ENCODE measurements at regions of chr1 and their contacts with region 1.

Region 1: GRCh38 chr1:154961497-154962262 is at the start of gene PYGO2:
- DNase-seq: peak; percentile 69 to 77
- H3K4me3 ChIP-seq: peak within 1 kb of the TSS; percentile 62 to 91
- H3K27ac ChIP-seq: peak within 1 kb of the TSS; percentile 98
- H3K4me1 ChIP-seq: peaks cover 0 to 7% of the 10 kb centered on the region in 2 donors
- H3K27me3 ChIP-seq: no peaks in the 10 kb centered on the region
- CTCF ChIP-seq: peak; percentile 61 to 91 (median 90)
- POLR2A ChIP-seq: peak; percentile 64 to 79
- total RNA-seq, gene PYGO2: 10.0 to 36.4 (median 15.9) TPM

Region 2: GRCh38 chr1:155012026-155012546 is 50.4 kb after region 1 on chr1:
- intact Hi-C with region 1: loop called (anchors 5 kb)
- DNase-seq: peak; percentile 72 to 78
- H3K4me3 ChIP-seq: no peak overlapping the region
- H3K27ac ChIP-seq: peak overlapping the region; percentile 14 to 57
- H3K4me1 ChIP-seq: peaks cover 0 to 10% of the 10 kb centered on the region in 2 donors
- H3K27me3 ChIP-seq: no peaks in the 10 kb centered on the region
- CTCF ChIP-seq: no peak
- POLR2A ChIP-seq: no peak